ENCODE measurements at regions of chr22 and their contacts with region 1.

Region 1: GRCh38 chr22:39319270-39320022 is at the start of gene RPL3:
- DNase-seq: peak; percentile 94 to 98 (median 97)
- ATAC-seq: peak; percentile 79 to 85
- H3K4me3 Mint-ChIP-seq: peak within 1 kb of the TSS; percentile 99 to 100 (median 100)
- H3K27ac Mint-ChIP-seq: peak within 1 kb of the TSS; percentile 96 to 100 (median 99)
- H3K4me1 Mint-ChIP-seq: peaks cover 25 to 58% (median 52%) of the 10 kb centered on the region in 4 donors
- H3K27me3 Mint-ChIP-seq: peaks cover 0 to 5% (median 0%) of the 10 kb centered on the region in 5 donors
- polyA plus RNA-seq, gene RPL3: 4,219 to 5,383 (median 4,759) TPM

Region 2: GRCh38 chr22:38755911-38756532 is 563.4 kb before region 1 on chr22 and contains the start of gene SUN2:
- POLR2A ChIA-PET with region 1: interaction called, 11 read pairs
- DNase-seq: peak; percentile 90 to 96 (median 94)
- ATAC-seq: peak; percentile 67 to 71
- H3K4me3 Mint-ChIP-seq: peak within 1 kb of the TSS; percentile 94 to 100 (median 99)
- H3K27ac Mint-ChIP-seq: peak within 1 kb of the TSS; percentile 90 to 100 (median 99)
- H3K4me1 Mint-ChIP-seq: peaks cover 41 to 77% (median 65%) of the 10 kb centered on the region in 4 donors
- H3K27me3 Mint-ChIP-seq: no peaks in the 10 kb centered on the region
- polyA plus RNA-seq, gene SUN2: 491 to 802 (median 518) TPM

Region 3: DNA sequence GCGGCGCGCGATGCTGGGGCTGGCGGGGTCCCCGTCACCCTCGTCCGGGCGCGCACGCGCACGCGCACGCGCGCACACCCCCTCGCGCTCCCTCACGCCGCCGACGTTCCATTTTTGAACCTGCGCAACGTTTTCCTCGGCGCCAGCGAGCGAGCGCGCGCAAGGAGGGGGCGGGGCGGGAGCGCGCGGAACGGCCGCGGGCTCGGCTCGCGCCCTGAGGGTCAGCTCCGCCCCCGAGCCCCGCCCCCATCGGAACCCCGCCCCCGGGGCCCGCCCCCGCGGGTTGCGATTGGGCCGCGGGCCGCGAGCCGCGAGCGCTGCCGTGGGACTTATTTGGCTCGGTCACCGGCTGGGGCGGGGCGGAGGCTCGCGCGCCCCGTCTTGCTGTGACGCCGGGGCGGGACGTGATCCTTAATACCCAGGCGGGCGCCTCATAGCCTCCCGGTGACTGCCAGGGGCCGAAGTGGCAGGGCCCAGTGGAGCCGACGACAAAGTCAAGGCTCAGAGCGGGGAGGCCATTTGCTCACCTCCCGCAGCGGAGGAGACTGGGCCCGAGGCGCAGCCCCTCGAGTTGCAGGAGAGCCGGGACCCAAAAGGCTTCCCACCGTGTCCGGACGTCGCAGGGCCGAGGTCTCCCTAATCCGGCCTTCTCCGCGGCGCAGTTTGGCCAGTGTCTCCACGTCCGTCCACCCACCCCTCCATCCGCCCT is 166.8 kb before region 1 on chr22 and contains the start of gene CBX7:
- POLR2A ChIA-PET with region 1: interaction called, 146 read pairs
- DNase-seq: peak; percentile 87 to 96 (median 94)
- ATAC-seq: peak; percentile 84 to 89
- H3K4me3 Mint-ChIP-seq: peak within 1 kb of the TSS; percentile 85 to 97 (median 90)
- H3K27ac Mint-ChIP-seq: peak within 1 kb of the TSS; percentile 90 to 98 (median 92)
- H3K4me1 Mint-ChIP-seq: peaks cover 23 to 43% (median 39%) of the 10 kb centered on the region in 4 donors
- H3K27me3 Mint-ChIP-seq: peaks cover 0 to 4% (median 2%) of the 10 kb centered on the region in 5 donors
- polyA plus RNA-seq, gene CBX7: 19.1 to 23.1 (median 19.5) TPM

Region 4: GRCh38 chr22:39178206-39179111 is 141.0 kb before region 1 on chr22:
- POLR2A ChIA-PET with region 1: interaction called, 231 read pairs
- DNase-seq: no peak
- ATAC-seq: no peak
- H3K4me3 Mint-ChIP-seq: peak overlapping the region in 2 of 10 donors; percentile 6 to 40
- H3K27ac Mint-ChIP-seq: peak overlapping the region in 9 of 10 donors; percentile 79 to 99 (median 92)
- H3K4me1 Mint-ChIP-seq: peaks cover 26 to 45% (median 36%) of the 10 kb centered on the region in 4 donors
- H3K27me3 Mint-ChIP-seq: peaks cover 0 to 2% (median 0%) of the 10 kb centered on the region in 5 donors

Region 5: DNA sequence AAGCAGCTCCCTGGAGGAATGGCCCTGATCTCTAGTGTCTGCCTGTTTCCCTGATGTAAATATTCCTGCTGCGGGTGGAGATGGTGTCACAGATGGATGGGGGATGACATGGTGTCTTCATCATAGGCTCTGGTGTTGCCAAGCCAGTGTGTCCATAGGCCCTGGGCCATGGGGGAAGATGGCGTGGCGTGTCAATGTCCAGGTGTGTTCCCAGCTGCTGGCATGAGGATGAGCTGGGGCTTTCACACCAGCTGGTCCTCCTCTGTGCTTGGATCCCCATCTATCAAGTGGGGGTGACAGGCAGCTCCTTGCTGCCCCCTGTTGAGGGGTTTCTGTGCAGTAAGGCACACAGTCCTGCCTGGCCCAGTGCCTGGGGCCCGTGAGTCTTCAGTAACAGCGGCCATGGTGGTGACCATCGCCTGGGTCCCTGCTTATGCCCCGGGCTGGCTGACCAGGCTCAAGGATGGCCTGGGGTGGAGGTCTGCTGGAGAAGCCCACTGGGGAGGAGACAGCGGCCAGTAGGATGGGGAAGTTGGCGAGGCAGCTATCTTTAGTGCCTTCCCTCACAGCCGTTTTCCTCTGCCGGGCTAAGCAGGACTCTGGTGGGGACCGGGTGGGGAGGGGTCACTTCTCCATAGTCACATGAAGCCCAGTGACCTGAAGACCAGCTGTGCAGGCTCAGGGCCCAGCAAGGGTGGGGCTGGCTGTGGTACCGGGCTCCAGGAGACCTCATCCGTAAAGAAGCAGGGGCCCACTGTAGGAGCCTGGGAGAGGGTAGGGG is 12.7 kb before region 1 on chr22:
- POLR2A ChIA-PET with region 1: interaction called, 22 read pairs
- DNase-seq: peak in 9 of 10 donors; percentile 31 to 78 (median 47)
- ATAC-seq: peak; percentile 62 to 72
- H3K4me3 Mint-ChIP-seq: no peak overlapping the region
- H3K27ac Mint-ChIP-seq: peak overlapping the region in 5 of 10 donors; percentile 23 to 57 (median 40)
- H3K4me1 Mint-ChIP-seq: peaks cover 8 to 18% (median 13%) of the 10 kb centered on the region in 4 donors
- H3K27me3 Mint-ChIP-seq: no peaks in the 10 kb centered on the region

Region 6: DNA sequence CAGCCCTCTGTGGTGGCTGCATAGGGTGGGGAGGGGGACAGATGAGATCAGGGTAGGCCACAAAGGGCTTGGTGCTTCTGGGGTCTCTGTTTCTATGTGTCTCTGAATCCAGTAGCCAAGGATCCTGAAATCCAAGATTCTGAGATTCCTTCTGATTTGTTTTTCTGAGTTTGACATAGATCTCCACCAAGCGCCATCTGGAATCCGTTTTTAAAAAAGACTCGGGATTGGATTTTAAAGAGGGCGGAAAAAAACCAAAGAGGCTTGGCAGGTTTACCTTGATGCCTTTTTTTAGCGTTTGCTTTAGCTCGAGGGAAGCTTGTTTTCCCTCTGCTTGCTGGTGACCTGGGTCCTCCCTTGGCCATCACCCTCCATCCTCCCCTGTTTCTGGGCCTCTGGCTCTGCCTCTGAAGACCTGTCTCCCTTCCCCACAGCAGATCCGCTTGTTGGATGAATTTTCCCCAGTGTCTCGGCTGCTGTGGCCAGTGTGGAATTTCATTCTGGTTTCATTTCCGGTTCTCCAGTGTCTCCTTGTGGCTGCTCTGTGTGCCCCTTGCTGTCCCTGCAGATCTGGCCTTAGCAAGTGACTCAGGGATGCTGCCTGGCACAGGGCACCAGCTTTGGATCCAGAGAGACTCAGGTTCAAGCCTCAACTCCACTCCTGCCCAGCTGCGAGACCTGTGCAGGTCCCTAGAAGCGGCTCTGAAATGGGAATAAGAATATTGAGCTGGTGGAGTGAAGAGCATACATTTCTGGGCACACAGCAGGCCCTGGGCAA is 45.5 kb after region 1 on chr22:
- POLR2A ChIA-PET with region 1: no interaction called
- DNase-seq: no peak
- ATAC-seq: no peak
- H3K4me3 Mint-ChIP-seq: no peak overlapping the region
- H3K27ac Mint-ChIP-seq: peak overlapping the region in 1 of 10 donors; percentile 53
- H3K4me1 Mint-ChIP-seq: peaks cover 10 to 24% (median 14%) of the 10 kb centered on the region in 4 donors
- H3K27me3 Mint-ChIP-seq: no peaks in the 10 kb centered on the region

Region 7: GRCh38 chr22:39405346-39406085 is 86.1 kb after region 1 on chr22:
- POLR2A ChIA-PET with region 1: interaction called, 18 read pairs
- DNase-seq: no peak
- ATAC-seq: peak; percentile 62 to 80
- H3K4me3 Mint-ChIP-seq: peak overlapping the region in 3 of 10 donors; percentile 0 to 19 (median 9)
- H3K27ac Mint-ChIP-seq: peak overlapping the region in 6 of 10 donors; percentile 9 to 46 (median 26)
- H3K4me1 Mint-ChIP-seq: peaks cover 34 to 88% (median 74%) of the 10 kb centered on the region in 4 donors
- H3K27me3 Mint-ChIP-seq: no peaks in the 10 kb centered on the region

Region 8: GRCh38 chr22:39532215-39533071 is 213.0 kb after region 1 on chr22 and contains the start of gene RPS19BP1:
- POLR2A ChIA-PET with region 1: interaction called, 71 read pairs
- DNase-seq: peak; percentile 93 to 100 (median 99)
- ATAC-seq: peak; percentile 87 to 88
- H3K4me3 Mint-ChIP-seq: peak within 1 kb of the TSS; percentile 90 to 99 (median 97)
- H3K27ac Mint-ChIP-seq: peak within 1 kb of the TSS; percentile 89 to 98 (median 96)
- H3K4me1 Mint-ChIP-seq: peaks cover 27 to 63% (median 56%) of the 10 kb centered on the region in 4 donors
- H3K27me3 Mint-ChIP-seq: peaks cover 0 to 1% (median 0%) of the 10 kb centered on the region in 5 donors
- polyA plus RNA-seq, gene RPS19BP1: 122 to 129 (median 128) TPM

Region 9: GRCh38 chr22:39601180-39601535 is 281.7 kb after region 1 on chr22:
- POLR2A ChIA-PET with region 1: no interaction called
- DNase-seq: no peak
- ATAC-seq: no peak
- H3K4me3 Mint-ChIP-seq: peak overlapping the region in 5 of 10 donors; percentile 14 to 47 (median 25)
- H3K27ac Mint-ChIP-seq: peak overlapping the region in 8 of 10 donors; percentile 4 to 88 (median 76)
- H3K4me1 Mint-ChIP-seq: peaks cover 22 to 50% (median 35%) of the 10 kb centered on the region in 4 donors
- H3K27me3 Mint-ChIP-seq: peaks cover 0 to 11% (median 6%) of the 10 kb centered on the region in 5 donors